SK-N-SH (cell line): ENCODE measurements at regions of chr18 and their contacts with region 1.

Region 1: DNA sequence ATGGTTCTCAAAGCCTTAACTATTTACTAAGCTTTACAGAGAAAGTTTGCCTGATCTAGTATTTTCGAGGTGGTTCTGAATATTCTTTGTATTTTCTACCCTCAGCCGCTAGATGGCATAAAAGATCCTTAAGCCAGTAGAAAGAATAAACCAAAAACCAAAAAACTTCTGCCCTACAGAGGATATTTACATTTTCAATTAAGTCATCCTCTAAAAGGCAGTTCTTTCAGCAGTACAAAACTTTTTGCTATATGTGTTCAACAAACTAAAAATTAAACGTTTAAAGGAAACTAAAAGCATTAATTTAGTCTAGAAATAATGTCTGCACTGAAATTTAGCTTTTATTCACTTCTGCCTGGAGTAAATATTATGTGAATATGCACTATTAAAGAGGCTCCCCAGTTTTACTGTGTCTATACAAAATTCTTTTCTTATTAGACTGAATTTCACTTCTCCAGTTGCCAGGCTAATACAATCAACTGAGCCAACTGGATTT is 297.5 kb downstream of the PIEZO2 start:
- DNase-seq: peak; percentile 29
- H3K4me3 ChIP-seq: peak overlapping the region in 1 of 2 experiments; percentile 10; a peak in 1 of 4 replicates
- H3K27ac ChIP-seq: no peak overlapping the region
- H3K4me1 ChIP-seq: no peaks in the 10 kb centered on the region
- H3K27me3 ChIP-seq: peaks cover 24% of the 10 kb centered on the region
- CTCF ChIP-seq: peak; percentile 87
- EP300 ChIP-seq: no peak
- RAD21 ChIP-seq: peak; percentile 81

Region 2: GRCh38 chr18:10750191-10751035 is 101.5 kb before region 1 on chr18:
- CTCF ChIA-PET with region 1: no interaction called
- POLR2A ChIA-PET with region 1: no interaction called
- DNase-seq: no peak
- H3K4me3 ChIP-seq: no peak overlapping the region
- H3K27ac ChIP-seq: no peak overlapping the region
- H3K4me1 ChIP-seq: no peaks in the 10 kb centered on the region
- H3K27me3 ChIP-seq: peaks cover 21% of the 10 kb centered on the region; the same call in 1 of the 2 replicates
- CTCF ChIP-seq: no peak
- EP300 ChIP-seq: no peak
- RAD21 ChIP-seq: no peak

Region 3: GRCh38 chr18:10841203-10841602 is 10.7 kb before region 1 on chr18:
- CTCF ChIA-PET with region 1: interaction called, 18 read pairs
- POLR2A ChIA-PET with region 1: no interaction called
- DNase-seq: no peak
- H3K4me3 ChIP-seq: no peak overlapping the region
- H3K27ac ChIP-seq: no peak overlapping the region
- H3K4me1 ChIP-seq: no peaks in the 10 kb centered on the region
- H3K27me3 ChIP-seq: no peaks in the 10 kb centered on the region; the same call in 1 of the 2 replicates
- CTCF ChIP-seq: no peak
- EP300 ChIP-seq: no peak
- RAD21 ChIP-seq: no peak

Region 4: GRCh38 chr18:10995550-10995949 is 143.7 kb after region 1 on chr18:
- CTCF ChIA-PET with region 1: no interaction called
- POLR2A ChIA-PET with region 1: no interaction called
- DNase-seq: no peak
- H3K4me3 ChIP-seq: no peak overlapping the region
- H3K27ac ChIP-seq: no peak overlapping the region
- H3K4me1 ChIP-seq: no peaks in the 10 kb centered on the region
- H3K27me3 ChIP-seq: no peaks in the 10 kb centered on the region
- CTCF ChIP-seq: no peak
- EP300 ChIP-seq: no peak
- RAD21 ChIP-seq: no peak